ENCODE measurements at regions of chr18 and their contacts with region 1.

Region 1: GRCh38 chr18:12038639-12039417 is 54.8 kb upstream of the ANKRD62 start:
- DNase-seq: peak; percentile 63
- H3K27ac ChIP-seq: peak overlapping the region; percentile 54
- CTCF ChIP-seq: peak; percentile 95

Region 2: DNA sequence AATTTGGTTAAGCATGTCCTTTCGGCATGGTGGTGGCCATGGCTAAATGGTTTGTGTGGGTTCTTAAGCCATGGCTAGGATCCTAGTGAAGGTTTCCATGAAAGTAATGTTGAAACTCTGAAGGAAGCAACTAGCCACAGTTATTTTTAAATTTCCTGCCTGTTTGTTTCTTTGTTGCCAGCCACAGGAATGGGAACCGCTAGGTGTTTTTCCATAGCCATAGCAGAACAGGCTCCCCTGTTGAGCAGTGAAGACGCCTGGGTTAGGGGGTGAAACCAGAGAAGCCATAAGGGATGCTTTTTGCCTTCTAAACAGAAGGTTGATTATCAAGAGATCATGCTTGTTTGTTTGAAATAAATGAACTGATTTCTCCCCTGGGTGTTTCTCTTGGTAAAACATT is 247.7 kb before region 1 on chr18:
- CTCF ChIA-PET with region 1: no interaction called
- POLR2A ChIA-PET with region 1: no interaction called
- DNase-seq: no peak
- H3K27ac ChIP-seq: no peak overlapping the region
- CTCF ChIP-seq: no peak

Region 3: DNA sequence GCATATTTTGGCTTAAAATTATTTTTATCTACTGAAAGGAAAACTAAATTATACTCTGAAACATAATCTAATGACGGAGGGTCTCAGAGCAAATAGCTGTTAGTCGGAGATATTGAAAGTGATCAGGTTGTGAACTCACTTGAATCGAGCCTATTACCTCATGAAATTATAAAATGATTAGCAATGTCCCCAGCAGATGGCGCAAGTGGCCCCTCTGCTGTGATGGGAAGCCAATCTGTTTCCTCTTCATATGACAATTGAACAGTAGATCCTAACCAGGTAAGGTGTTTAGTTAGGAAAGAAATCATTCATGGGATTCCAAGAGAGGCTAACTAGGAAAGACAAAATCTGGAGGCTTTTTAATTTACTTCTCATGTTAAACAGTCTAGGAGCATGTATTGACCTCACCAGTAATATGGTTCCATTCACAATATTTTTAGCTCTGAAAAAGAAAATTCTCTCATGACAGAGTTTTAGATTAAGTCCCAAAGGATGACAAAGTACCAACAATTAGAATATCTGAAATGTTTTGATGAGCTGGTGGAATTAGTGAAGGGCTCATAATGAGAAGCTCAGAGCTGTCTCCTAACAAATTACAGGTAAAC is 100.9 kb before region 1 on chr18:
- CTCF ChIA-PET with region 1: interaction called, 30 read pairs
- POLR2A ChIA-PET with region 1: no interaction called
- DNase-seq: peak; percentile 74
- H3K27ac ChIP-seq: no peak overlapping the region
- CTCF ChIP-seq: peak; percentile 85

Region 4: GRCh38 chr18:11995445-11996189 is 43.2 kb before region 1 on chr18:
- CTCF ChIA-PET with region 1: interaction called, 12 read pairs
- POLR2A ChIA-PET with region 1: no interaction called
- DNase-seq: peak; percentile 67
- H3K27ac ChIP-seq: peak overlapping the region; percentile 75
- CTCF ChIP-seq: peak; percentile 69

Region 5: DNA sequence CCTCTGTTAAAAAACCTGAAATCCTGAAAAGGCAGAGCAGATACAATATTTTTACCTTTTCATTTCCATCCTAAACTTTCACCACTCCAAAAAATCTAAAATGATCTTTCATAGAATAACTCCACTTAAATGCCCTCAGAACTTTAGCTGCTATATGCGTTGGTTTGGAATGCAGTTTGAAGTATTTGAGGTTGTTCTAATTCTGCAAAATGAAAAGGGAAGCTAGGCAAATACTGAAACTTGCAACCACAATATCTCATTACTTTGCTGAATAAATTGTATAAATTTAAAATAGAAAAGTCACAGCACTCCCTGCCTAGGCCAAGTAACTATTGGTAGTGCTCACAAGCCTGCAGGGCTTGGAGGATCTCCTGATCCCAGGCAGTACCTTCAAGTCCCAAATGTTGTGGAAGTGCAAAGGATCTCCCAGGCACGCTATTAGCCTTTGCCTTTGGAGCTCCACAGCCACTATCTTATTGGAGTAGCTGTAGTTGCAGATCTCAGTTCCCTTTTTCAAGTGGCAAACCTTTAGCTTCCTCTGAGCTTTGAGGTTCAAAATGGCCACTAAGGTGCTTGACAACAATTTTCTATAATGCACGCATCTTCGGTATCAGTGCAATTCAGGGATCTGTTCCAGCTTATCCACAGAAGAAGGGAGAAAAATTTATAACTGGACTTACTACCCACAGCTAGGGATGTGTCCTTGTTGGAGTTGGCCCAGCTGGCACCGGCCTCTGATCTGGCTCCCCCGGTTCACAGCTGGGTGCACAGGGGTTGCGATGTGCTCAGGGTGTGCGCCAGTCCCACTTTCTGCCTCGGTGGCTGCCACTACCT is 11.4 kb after region 1 on chr18:
- CTCF ChIA-PET with region 1: interaction called, 15 read pairs
- POLR2A ChIA-PET with region 1: no interaction called
- DNase-seq: no peak
- H3K27ac ChIP-seq: no peak overlapping the region
- CTCF ChIP-seq: no peak

Measured in RWPE1 (cell line).